ENCODE measurements at regions of chr1 and their contacts with region 1.

Region 1: GRCh38 chr1:16206547-16207317 is 5.7 kb downstream of the ARHGEF19 start:
- DNase-seq: peak; percentile 99
- H3K4me3 ChIP-seq: peak overlapping the region; percentile 37 to 60 (median 46)
- H3K27ac ChIP-seq: peak overlapping the region; percentile 85 to 97 (median 90)
- H3K4me1 ChIP-seq: peaks cover 0 to 20% (median 16%) of the 10 kb centered on the region in 4 donors
- H3K27me3 ChIP-seq: no peaks in the 10 kb centered on the region
- CTCF ChIP-seq: no peak
- EP300 ChIP-seq: no peak
- POLR2A ChIP-seq: peak in 1 of 2 donors; percentile 56

Region 2: GRCh38 chr1:15328351-15329103 is 878.2 kb before region 1 on chr1:
- intact Hi-C with region 1: no loop called
- DNase-seq: no peak
- H3K4me3 ChIP-seq: no peak overlapping the region
- H3K27ac ChIP-seq: peak overlapping the region in 2 of 4 donors; percentile 9 to 59
- H3K4me1 ChIP-seq: peaks cover 0 to 25% (median 23%) of the 10 kb centered on the region in 4 donors
- H3K27me3 ChIP-seq: no peaks in the 10 kb centered on the region
- CTCF ChIP-seq: no peak
- EP300 ChIP-seq: no peak
- POLR2A ChIP-seq: no peak

Region 3: GRCh38 chr1:16167331-16168143 is 39.2 kb before region 1 on chr1:
- intact Hi-C with region 1: no loop called
- DNase-seq: no peak
- H3K4me3 ChIP-seq: peak overlapping the region; percentile 29 to 54 (median 48)
- H3K27ac ChIP-seq: peak overlapping the region in 1 of 4 donors; percentile 35
- H3K4me1 ChIP-seq: peaks cover 0 to 21% (median 19%) of the 10 kb centered on the region in 4 donors
- H3K27me3 ChIP-seq: no peaks in the 10 kb centered on the region
- CTCF ChIP-seq: no peak
- EP300 ChIP-seq: no peak
- POLR2A ChIP-seq: no peak

Region 4: DNA sequence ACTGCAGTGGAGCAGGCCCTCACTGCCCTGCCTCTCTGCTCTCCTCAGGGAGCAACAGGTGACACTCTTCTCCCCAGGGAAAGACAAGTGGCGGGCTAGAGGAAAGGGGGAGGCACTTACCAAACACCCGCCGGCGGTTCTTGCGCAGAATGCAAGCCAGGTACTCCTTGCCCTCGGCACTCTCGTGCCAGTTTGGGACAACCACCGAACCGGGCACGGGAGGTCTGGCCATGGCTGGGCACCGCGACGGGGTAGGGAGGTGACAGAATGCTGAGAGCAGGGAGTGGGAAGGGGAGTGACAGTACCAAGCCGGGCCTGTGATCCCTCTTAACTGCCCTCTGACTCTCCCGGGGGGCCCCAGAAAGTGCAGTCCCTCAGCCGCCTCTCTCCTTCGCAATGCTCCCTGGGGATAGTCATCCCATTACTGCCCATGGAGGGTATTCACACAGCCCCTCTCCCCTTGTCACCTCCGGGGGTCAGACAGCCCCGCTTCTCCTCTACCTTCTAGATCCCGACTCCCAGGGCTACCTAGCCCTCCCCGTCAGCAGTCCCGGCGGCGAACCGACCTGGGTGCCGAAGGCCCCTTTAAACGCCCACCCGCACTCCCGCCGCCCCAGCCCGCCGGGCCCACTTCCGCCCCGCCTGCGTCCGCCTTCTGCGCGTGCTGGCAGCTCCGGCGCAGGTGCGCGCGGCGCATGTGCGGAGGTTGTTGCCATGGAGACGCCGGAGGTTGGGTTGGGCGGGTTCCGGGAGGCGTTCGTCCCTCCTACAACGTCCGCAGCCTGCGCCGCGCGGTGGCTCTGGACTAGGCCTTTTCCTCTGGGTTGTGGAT is 30.0 kb after region 1 on chr1 and contains the start of gene CPLANE2:
- intact Hi-C with region 1: loop called (anchors 2 kb)
- DNase-seq: peak; percentile 97
- H3K4me3 ChIP-seq: peak within 1 kb of the TSS; percentile 41 to 69 (median 62)
- H3K27ac ChIP-seq: peak within 1 kb of the TSS; percentile 83 to 90 (median 87)
- H3K4me1 ChIP-seq: peaks cover 0 to 18% (median 13%) of the 10 kb centered on the region in 4 donors
- H3K27me3 ChIP-seq: no peaks in the 10 kb centered on the region
- CTCF ChIP-seq: no peak
- EP300 ChIP-seq: peak in 1 of 4 donors; percentile 13
- POLR2A ChIP-seq: no peak
- total RNA-seq, gene CPLANE2: 2.5 to 7.1 (median 3.2) TPM

Measured in sigmoid colon (tissue), 7 donors.